Calu3 (cell line): ENCODE measurements at regions of chr16 and their contacts with region 1.

Region 1: GRCh38 chr16:85188822-85189672 is 76.8 kb upstream of the CIBAR2 start:
- DNase-seq: no peak
- H3K4me3 Mint-ChIP-seq: no peak overlapping the region
- H3K27ac Mint-ChIP-seq: no peak overlapping the region
- H3K4me1 Mint-ChIP-seq: no peaks in the 10 kb centered on the region
- H3K27me3 Mint-ChIP-seq: peaks cover 92% of the 10 kb centered on the region
- CTCF ChIP-seq: no peak

Region 2: DNA sequence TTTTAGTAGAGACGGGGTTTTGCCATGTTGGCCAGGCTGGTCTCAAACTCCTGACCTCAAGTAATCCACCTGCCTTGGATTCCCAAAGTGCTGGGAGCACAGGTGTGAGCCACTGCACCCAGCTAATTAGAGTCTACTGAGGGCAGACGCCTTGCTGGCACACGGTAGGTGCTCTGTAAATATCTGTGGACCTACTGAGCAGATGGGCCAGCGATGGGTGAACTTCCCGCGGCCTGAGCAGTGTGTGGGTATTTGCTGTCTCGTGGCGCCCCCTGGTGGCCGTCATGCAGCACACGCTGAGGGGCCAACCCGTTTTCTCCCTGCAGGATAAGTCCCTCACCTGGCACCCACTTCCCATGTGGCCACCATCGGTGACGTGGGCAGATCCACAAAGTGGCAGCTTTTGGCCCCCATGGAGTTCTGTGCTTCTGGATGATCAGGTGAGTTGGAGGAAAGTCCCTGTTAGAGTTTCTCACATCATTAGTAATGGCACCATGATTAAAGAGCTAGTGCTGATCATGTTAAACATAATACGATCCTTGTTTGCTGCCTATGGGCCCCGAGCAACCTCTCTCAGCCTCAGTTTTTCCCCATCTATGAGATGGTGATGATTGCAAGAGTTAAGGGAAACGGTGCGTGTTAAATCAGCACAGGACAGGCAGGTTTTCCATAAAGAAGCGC is 218.5 kb before region 1 on chr16:
- CTCF ChIA-PET with region 1: no interaction called
- intact Hi-C with region 1: no loop called
- DNase-seq: peak; percentile 88
- H3K4me3 Mint-ChIP-seq: no peak overlapping the region
- H3K27ac Mint-ChIP-seq: no peak overlapping the region
- H3K4me1 Mint-ChIP-seq: no peaks in the 10 kb centered on the region
- H3K27me3 Mint-ChIP-seq: peaks cover 9% of the 10 kb centered on the region
- CTCF ChIP-seq: peak; percentile 95

Region 3: GRCh38 chr16:85162478-85163277 is 26.4 kb before region 1 on chr16:
- CTCF ChIA-PET with region 1: no interaction called
- intact Hi-C with region 1: no loop called
- DNase-seq: no peak
- H3K4me3 Mint-ChIP-seq: no peak overlapping the region
- H3K27ac Mint-ChIP-seq: no peak overlapping the region
- H3K4me1 Mint-ChIP-seq: peaks cover 22% of the 10 kb centered on the region
- H3K27me3 Mint-ChIP-seq: peaks cover 97% of the 10 kb centered on the region
- CTCF ChIP-seq: no peak

Region 4: DNA sequence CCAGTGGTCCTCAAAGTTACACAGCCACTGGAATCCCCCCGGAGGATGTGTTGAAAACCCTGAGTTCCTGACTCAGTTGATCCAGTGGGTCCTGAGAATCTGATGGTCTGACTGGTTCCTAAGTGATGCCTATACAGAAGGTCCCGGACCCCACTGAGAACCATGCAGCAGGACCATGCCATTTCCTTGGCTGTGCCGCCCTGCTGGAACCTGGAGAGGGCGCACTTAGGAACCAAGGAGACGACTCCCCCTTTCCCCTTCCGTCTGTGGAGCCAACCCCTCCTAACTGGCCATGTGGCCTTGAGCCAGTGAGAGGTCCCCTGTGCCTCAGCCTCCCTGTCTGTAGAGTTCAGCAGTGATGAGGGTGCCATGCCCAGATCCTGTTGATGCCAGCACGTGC is 539.8 kb after region 1 on chr16:
- CTCF ChIA-PET with region 1: interaction called, 12 read pairs
- intact Hi-C with region 1: no loop called
- DNase-seq: no peak
- H3K4me3 Mint-ChIP-seq: no peak overlapping the region
- H3K27ac Mint-ChIP-seq: no peak overlapping the region
- H3K4me1 Mint-ChIP-seq: no peaks in the 10 kb centered on the region
- H3K27me3 Mint-ChIP-seq: peaks cover 14% of the 10 kb centered on the region
- CTCF ChIP-seq: no peak